ENCODE measurements at regions of chr6 and their contacts with region 1.

Region 1: GRCh38 chr6:154848580-154848979 is 115.4 kb downstream of the SCAF8 start:
- DNase-seq: no peak
- ATAC-seq: no peak
- H3K4me3 ChIP-seq: no peak overlapping the region
- H3K27ac ChIP-seq: no peak overlapping the region
- H3K4me1 ChIP-seq: peaks cover 0 to 37% (median 10%) of the 10 kb centered on the region in 9 donors
- H3K27me3 ChIP-seq: no peaks in the 10 kb centered on the region
- CTCF ChIP-seq: no peak

Region 2: GRCh38 chr6:156839591-156840001 is 1991.0 kb after region 1 on chr6:
- intact Hi-C with region 1: loop called in 1 of 10 experiments (anchors 5 kb)
- DNase-seq: peak in 1 of 2 donors; percentile 51
- ATAC-seq: peak; percentile 75 to 96 (median 82)
- H3K4me3 ChIP-seq: peak overlapping the region in 3 of 10 donors; percentile 2 to 9 (median 5)
- H3K27ac ChIP-seq: peak overlapping the region in 9 of 10 donors; percentile 4 to 71 (median 61)
- H3K4me1 ChIP-seq: peaks cover 18 to 84% (median 58%) of the 10 kb centered on the region in 9 donors
- H3K27me3 ChIP-seq: no peaks in the 10 kb centered on the region
- CTCF ChIP-seq: no peak

Measured in heart right ventricle (tissue), 16 donors.